Psoas muscle (tissue), 8 donors: ENCODE measurements at regions of chr11 and their contacts with region 1.

Region 1: DNA sequence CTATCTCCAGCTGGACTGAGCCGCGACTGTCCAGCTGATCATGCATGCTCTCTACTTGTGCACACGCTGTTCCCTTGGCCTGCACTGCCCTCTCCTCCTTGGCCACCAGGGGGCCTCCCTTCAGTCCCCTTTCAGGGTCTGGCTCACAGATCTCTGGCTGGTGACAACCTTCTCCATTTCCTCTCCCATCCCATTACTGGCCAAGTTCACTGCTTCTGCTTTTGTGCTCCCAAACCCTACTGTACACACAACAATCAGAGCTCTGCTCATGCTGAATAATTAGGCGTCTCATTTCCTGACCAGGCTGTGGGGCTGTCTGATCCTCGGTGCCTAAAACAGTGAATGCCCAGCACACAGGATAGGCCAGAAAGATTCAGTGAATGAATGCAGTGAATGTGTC is 224.0 kb upstream of the NARS2 start:
- DNase-seq: peak; percentile 74 to 85
- ATAC-seq: peak; percentile 80 to 90 (median 82)
- H3K4me3 ChIP-seq: no peak overlapping the region
- H3K27ac ChIP-seq: no peak overlapping the region
- H3K4me1 ChIP-seq: no peaks in the 10 kb centered on the region
- H3K27me3 ChIP-seq: no peaks in the 10 kb centered on the region
- CTCF ChIP-seq: peak; percentile 76

Region 2: DNA sequence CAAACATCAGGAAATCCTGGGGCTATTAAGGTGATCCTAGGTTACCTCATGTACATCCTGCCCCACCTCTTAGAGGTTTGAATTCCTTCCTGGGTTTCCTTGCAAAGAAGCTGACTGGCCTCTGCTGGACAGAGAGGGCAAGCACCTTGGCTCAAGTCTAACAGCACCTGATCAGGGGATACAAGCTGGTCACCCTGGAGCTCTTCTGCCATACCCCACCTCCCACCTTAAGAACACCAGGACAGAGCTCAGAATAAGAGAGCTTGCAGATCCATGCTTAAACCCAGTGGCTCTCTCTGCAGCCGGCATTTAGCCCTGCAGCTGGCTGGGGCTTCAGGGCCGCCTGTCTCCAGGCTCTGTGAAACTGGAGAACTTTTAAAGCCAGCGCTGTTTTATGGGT is 162.6 kb after region 1 on chr11:
- intact Hi-C with region 1: loop called in 1 of 2 experiments (anchors 5 kb)
- DNase-seq: no peak
- ATAC-seq: peak in 2 of 4 donors; percentile 52 to 56
- H3K4me3 ChIP-seq: no peak overlapping the region
- H3K27ac ChIP-seq: no peak overlapping the region
- H3K4me1 ChIP-seq: no peaks in the 10 kb centered on the region
- H3K27me3 ChIP-seq: peaks cover 0 to 9% (median 0%) of the 10 kb centered on the region in 3 donors
- CTCF ChIP-seq: peak; percentile 29

Region 3: DNA sequence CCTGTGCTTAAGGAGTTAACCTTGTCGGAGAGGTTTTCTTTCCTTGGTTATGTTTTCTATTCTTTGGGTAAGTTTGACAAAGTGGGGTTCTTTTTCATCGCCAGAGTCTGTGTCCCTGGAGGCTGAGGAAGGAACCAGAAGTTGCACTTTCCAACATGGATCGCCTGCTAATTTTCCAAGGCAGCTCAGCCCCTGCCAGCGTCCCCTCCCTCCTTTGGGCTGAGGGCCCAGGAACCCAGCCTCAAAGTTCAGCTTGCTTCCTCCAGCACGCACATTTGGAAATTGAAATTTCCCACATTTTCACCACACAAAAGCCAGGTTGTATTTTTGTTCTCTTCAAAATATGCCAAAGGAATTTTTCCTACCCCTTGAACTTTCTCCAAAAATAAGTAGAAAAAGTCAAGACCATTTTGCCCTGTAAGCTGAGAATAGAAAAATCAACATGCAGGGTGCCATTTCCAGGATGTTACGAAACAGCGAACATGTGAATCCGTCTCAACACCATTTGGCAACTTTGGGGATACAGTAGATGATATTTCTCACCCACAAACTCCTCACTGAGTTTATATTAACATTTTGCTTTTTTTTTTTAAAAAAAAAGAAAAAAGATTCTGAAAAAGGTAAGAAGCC is 298.7 kb after region 1 on chr11:
- intact Hi-C with region 1: loop called in 1 of 2 experiments (anchors 5 kb)
- DNase-seq: peak in 1 of 2 donors; percentile 25
- ATAC-seq: no peak
- H3K4me3 ChIP-seq: no peak overlapping the region
- H3K27ac ChIP-seq: no peak overlapping the region
- H3K4me1 ChIP-seq: peaks cover 10% of the 10 kb centered on the region
- H3K27me3 ChIP-seq: peaks cover 0 to 2% (median 0%) of the 10 kb centered on the region in 3 donors
- CTCF ChIP-seq: no peak

Region 4: GRCh38 chr11:79201637-79202333 is 403.1 kb after region 1 on chr11:
- intact Hi-C with region 1: no loop called
- DNase-seq: no peak
- ATAC-seq: no peak
- H3K4me3 ChIP-seq: no peak overlapping the region
- H3K27ac ChIP-seq: no peak overlapping the region
- H3K4me1 ChIP-seq: no peaks in the 10 kb centered on the region
- H3K27me3 ChIP-seq: no peaks in the 10 kb centered on the region
- CTCF ChIP-seq: no peak